Mammary epithelial cell (primary cell): ENCODE measurements at regions of chr22 and their contacts with region 1.

Region 1: DNA sequence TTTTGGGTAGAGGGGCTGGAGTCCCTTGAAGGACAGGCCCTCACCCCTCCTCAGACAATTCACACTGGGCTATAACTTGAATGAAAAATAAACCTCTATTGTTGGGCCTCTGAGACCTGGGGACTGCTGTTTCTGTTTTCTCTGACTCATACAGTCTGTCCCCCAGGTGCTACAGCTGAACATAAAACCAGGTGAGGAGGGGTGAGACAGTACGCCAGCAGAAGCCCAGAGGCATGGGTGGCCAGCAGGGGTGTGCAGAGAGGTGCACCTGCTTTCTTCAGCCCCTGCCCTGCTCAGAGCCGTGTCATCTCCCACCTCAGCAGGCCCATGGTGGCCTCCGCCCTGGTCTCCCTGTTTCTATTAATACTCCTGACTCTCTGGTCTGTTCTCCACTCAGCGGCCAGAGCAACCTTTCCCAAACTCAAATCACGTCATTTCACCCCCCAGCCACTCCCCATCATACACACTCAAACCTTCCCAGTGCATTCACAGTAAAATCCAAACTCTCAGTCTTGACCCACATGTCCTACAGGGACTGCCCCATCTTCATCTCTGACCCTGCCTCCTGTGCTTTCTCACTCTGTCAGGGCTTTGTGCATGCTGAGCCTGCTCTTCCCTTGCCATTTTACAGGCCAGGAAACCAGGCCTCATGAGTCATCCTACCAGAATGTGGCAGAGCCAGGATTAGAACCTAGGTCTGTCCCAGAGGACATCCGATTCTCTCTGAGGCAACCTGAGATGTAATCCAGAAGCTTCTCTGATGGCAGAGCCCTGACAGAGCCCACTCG is 5.4 kb upstream of the IL2RB start:
- DNase-seq: peak; percentile 12
- H3K4me3 ChIP-seq: no peak overlapping the region
- H3K27ac ChIP-seq: no peak overlapping the region
- H3K4me1 ChIP-seq: no peaks in the 10 kb centered on the region
- H3K27me3 ChIP-seq: no peaks in the 10 kb centered on the region
- CTCF ChIP-seq: no peak

Region 2: GRCh38 chr22:37060801-37061610 is 94.1 kb before region 1 on chr22:
- CTCF ChIA-PET with region 1: no interaction called
- dilution Hi-C with region 1: no loop called
- in situ Hi-C with region 1: no loop called
- intact Hi-C with region 1: no loop called
- DNase-seq: no peak
- H3K4me3 ChIP-seq: no peak overlapping the region
- H3K27ac ChIP-seq: no peak overlapping the region
- H3K4me1 ChIP-seq: no peaks in the 10 kb centered on the region
- H3K27me3 ChIP-seq: no peaks in the 10 kb centered on the region
- CTCF ChIP-seq: no peak

Region 3: DNA sequence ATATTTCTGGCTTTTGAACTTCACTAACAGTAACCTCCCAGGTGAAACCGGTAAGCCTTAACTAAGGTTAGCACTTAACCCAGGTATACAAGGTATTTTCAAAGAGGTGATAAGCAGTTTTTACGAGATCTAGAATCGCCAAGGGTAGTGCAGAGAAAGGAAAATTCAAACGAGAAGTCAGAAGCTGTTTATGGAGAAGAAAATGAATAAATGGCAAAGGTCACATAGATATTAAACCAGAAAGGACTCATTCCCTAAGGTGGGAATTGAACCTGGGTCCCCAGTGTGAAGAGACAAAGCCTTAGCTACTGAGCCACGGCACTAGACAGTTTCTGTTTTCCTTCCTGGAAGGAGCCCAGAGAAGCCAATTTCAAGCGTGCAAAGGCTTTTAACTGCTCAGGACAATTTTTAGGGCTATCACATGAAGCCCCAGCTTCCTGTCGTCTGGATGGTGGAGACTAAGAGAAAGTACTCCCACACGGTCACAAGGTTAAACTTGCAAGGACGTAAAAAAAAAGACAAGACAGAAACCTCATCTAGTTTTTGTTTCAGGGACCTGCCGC is 38.6 kb after region 1 on chr22:
- CTCF ChIA-PET with region 1: no interaction called
- dilution Hi-C with region 1: loop called (anchors 5 kb)
- in situ Hi-C with region 1: no loop called
- intact Hi-C with region 1: no loop called
- DNase-seq: peak; percentile 52
- H3K4me3 ChIP-seq: no peak overlapping the region
- H3K27ac ChIP-seq: no peak overlapping the region
- H3K4me1 ChIP-seq: peaks cover 41% of the 10 kb centered on the region
- H3K27me3 ChIP-seq: no peaks in the 10 kb centered on the region
- CTCF ChIP-seq: no peak